ENCODE measurements at regions of chr2 and their contacts with region 1.

Region 1: DNA sequence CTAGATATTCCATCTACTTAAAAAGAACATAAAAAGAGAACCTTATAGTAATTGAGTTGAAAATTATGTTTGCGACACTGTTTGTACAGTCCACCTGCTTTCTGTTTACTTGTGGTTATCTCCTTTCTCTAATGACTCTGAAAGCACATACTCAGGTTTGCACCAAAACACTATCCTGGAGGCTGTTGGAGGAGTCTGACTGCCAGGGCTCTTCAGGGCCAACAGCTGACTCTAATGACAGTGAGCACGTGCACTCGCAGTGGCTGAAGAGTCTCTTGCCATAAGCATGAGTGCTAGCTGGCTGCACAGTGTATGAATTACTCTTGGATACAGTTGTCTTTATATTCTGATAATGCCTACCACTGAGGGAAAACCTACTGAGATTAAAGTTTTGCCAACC is 16.7 kb upstream of the GLS start:
- DNase-seq: no peak
- H3K4me3 Mint-ChIP-seq: no peak overlapping the region
- H3K27ac Mint-ChIP-seq: no peak overlapping the region
- H3K4me1 Mint-ChIP-seq: peaks cover 10% of the 10 kb centered on the region
- H3K27me3 Mint-ChIP-seq: peaks cover 2% of the 10 kb centered on the region

Region 2: DNA sequence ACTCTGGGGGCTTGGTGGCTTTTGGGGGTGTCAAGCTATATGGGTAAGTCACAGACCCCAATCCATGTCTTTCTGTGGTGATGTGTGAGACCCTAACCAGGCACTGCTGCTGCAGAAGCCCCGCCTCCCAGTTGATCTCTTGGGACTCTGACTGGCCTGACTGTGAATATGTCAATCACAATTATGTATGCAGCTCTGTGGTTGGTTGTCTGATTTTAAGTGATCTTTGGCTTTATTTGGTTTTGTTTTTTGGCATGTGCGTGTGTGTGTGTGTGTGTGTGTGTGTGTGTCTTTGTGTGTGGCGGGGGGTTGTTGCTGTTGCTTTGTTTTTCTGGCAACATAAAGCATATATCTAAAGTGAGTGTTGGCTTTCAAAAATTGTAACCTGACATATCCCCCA is 61.8 kb before region 1 on chr2:
- CTCF ChIA-PET with region 1: no interaction called
- POLR2A ChIA-PET with region 1: no interaction called
- DNase-seq: no peak
- H3K4me3 Mint-ChIP-seq: no peak overlapping the region
- H3K27ac Mint-ChIP-seq: no peak overlapping the region
- H3K4me1 Mint-ChIP-seq: no peaks in the 10 kb centered on the region
- H3K27me3 Mint-ChIP-seq: peaks cover 1% of the 10 kb centered on the region

Region 3: GRCh38 chr2:190877436-190877835 is 13.5 kb after region 1 on chr2:
- CTCF ChIA-PET with region 1: interaction called, 13 read pairs
- POLR2A ChIA-PET with region 1: no interaction called
- DNase-seq: no peak
- H3K4me3 Mint-ChIP-seq: no peak overlapping the region
- H3K27ac Mint-ChIP-seq: no peak overlapping the region
- H3K4me1 Mint-ChIP-seq: peaks cover 21% of the 10 kb centered on the region
- H3K27me3 Mint-ChIP-seq: no peaks in the 10 kb centered on the region

Region 4: GRCh38 chr2:191128172-191128910 is 264.4 kb after region 1 on chr2:
- CTCF ChIA-PET with region 1: no interaction called
- POLR2A ChIA-PET with region 1: no interaction called
- DNase-seq: no peak
- H3K4me3 Mint-ChIP-seq: no peak overlapping the region
- H3K27ac Mint-ChIP-seq: peak overlapping the region; percentile 67
- H3K4me1 Mint-ChIP-seq: peaks cover 56% of the 10 kb centered on the region
- H3K27me3 Mint-ChIP-seq: no peaks in the 10 kb centered on the region